AG04450 (cell line): ENCODE measurements at regions of chr14 and their contacts with region 1.

Region 1: GRCh38 chr14:37246427-37246914 is 48.7 kb downstream of the MIPOL1 start:
- DNase-seq: peak; percentile 27
- H3K4me3 ChIP-seq: no peak overlapping the region
- H3K27ac ChIP-seq: no peak overlapping the region
- H3K27me3 ChIP-seq: no peaks in the 10 kb centered on the region
- CTCF ChIP-seq: peak; percentile 72

Region 2: DNA sequence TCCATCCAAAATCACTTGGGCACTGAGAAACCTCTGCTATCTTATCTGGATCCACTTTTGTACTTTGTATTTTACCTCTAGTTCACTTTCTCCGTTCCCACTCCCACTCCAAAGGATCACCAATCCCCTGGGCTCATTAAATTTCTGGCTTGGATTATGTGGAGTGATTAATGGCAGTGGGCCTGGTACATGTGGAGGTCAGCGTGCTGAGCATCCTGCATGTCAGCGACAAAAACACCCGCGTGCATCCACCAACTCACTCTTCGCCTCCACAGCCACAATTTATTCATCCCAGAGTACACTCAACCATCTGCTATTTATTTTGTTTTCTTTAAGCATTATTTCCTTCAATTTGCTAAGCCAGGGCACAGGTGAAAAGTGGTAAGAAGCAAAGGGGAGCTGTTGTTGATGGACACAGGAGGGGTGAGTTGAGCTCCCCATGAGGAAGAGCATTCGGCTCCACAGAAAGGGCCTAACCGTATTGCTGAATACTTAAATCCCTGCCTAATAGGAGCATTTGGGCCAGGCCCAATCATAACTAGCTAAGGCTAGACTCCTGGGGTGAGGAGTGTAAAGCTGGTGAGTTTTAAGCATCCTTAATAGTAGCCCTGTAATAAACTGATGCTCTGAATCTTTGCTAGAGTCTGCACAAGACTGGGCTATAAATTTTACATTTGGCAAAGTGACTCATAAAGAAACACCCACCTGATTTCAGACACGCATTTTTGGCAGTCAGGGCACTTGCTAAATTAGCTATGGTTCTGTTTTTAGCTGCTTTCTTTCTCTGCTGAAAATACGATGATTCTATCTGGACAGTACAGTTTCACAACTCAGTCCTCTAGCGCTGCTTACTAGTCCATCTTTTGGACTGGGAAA is 211.8 kb before region 1 on chr14:
- CTCF ChIA-PET with region 1: no interaction called
- POLR2A ChIA-PET with region 1: no interaction called
- DNase-seq: peak; percentile 3
- H3K4me3 ChIP-seq: no peak overlapping the region
- H3K27ac ChIP-seq: no peak overlapping the region
- H3K27me3 ChIP-seq: no peaks in the 10 kb centered on the region
- CTCF ChIP-seq: no peak

Region 3: DNA sequence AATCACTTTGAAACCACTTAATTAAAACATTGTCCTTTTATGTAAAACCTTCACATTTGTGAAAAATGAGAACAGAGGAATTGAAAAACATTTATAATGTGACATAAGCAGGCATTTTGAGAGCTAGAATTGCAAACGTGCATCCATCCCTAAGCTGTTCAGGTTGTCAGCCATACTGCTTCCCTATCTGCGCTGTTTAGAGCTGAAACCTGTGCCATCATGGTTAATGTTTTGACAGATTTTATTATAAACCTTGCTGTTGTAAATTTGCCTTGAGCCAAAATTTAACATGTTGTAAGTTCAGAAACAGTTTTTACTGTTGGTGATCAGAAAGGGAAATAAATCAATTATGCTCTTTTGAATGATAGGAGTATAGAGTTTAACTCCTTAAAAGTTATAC is 316.7 kb after region 1 on chr14:
- CTCF ChIA-PET with region 1: interaction called, 16 read pairs
- POLR2A ChIA-PET with region 1: no interaction called
- DNase-seq: no peak
- H3K4me3 ChIP-seq: no peak overlapping the region
- H3K27ac ChIP-seq: no peak overlapping the region
- H3K27me3 ChIP-seq: no peaks in the 10 kb centered on the region
- CTCF ChIP-seq: no peak

Region 4: DNA sequence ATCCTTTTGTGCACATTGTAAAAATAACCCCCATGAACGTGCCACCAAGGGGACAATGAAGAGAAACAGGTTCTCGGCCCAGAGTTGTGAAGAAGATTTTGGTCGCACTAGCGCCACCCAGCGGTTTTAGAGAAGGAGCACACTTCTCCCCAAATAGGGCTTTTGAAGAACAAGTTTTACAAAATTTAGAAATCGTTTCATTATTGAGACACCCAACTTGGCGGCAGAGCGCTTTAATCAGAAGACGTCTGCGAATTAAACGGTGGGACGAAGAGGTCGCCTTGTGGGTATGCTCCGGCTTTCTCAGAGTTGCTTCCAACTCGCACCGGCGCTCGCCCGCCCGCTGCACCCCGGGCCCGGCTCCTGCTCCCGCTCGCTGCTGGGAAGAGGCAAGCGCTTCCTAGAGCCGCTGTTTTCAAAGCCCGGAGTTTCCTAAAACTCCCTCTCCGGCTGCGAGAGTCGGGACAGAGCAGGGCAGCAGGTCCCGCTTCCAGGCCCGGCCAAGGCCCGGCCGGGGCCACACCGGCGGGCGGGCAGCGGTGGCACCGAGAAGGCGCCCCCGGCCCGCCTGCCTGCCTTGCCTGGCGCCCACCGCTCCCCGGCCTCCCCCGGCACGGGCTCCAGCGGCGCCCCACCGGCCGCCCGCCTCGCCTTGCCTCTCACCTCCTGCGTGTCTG is 347.9 kb after region 1 on chr14:
- CTCF ChIA-PET with region 1: interaction called, 48 read pairs
- POLR2A ChIA-PET with region 1: no interaction called
- DNase-seq: peak; percentile 32
- H3K4me3 ChIP-seq: peak overlapping the region; percentile 61
- H3K27ac ChIP-seq: no peak overlapping the region
- H3K27me3 ChIP-seq: peaks cover 77% of the 10 kb centered on the region
- CTCF ChIP-seq: peak; percentile 86